ENCODE measurements at regions of chr17 and their contacts with region 1.

Region 1: GRCh38 chr17:64025732-64026294 is 5.4 kb upstream of the ICAM2 start:
- DNase-seq: peak; percentile 57 to 77
- H3K4me3 ChIP-seq: peak overlapping the region; percentile 16; the same call in 1 of the 2 replicates
- H3K27ac ChIP-seq: no peak overlapping the region
- H3K4me1 ChIP-seq: 0 out of 2 replicates have a peak, but pooled peaks cover 4% of the 10 kb centered on the region
- H3K27me3 ChIP-seq: no peaks in the 10 kb centered on the region
- CTCF ChIP-seq: peak; percentile 96

Region 2: GRCh38 chr17:63919311-63919723 is 106.5 kb before region 1 on chr17:
- CTCF ChIA-PET with region 1: interaction called, 15 read pairs
- POLR2A ChIA-PET with region 1: no interaction called
- intact Hi-C with region 1: loop called (anchors 1 kb)
- DNase-seq: peak in 1 of 2 experiments; percentile 66
- H3K4me3 ChIP-seq: no peak overlapping the region
- H3K27ac ChIP-seq: no peak overlapping the region
- H3K4me1 ChIP-seq: no peaks in the 10 kb centered on the region
- H3K27me3 ChIP-seq: peaks cover 18% of the 10 kb centered on the region; the same call in 1 of the 2 replicates
- CTCF ChIP-seq: peak; percentile 96

Region 3: GRCh38 chr17:64103391-64104364 is 77.9 kb after region 1 on chr17:
- CTCF ChIA-PET with region 1: no interaction called
- POLR2A ChIA-PET with region 1: interaction called, 11 read pairs
- intact Hi-C with region 1: no loop called
- DNase-seq: peak in 1 of 2 experiments; percentile 50
- H3K4me3 ChIP-seq: no peak overlapping the region
- H3K27ac ChIP-seq: peak overlapping the region; percentile 31; the same call in 1 of the 2 replicates
- H3K4me1 ChIP-seq: peaks cover 42% of the 10 kb centered on the region
- H3K27me3 ChIP-seq: no peaks in the 10 kb centered on the region
- CTCF ChIP-seq: no peak

Measured in PC-9 (cell line).